ENCODE measurements at regions of chr2 and their contacts with region 1.

Region 1: GRCh38 chr2:215773728-215774127 is 239.6 kb downstream of the MREG start:
- DNase-seq: no peak
- H3K4me3 ChIP-seq: no peak overlapping the region
- H3K27ac ChIP-seq: no peak overlapping the region
- H3K4me1 ChIP-seq: peaks cover 9% of the 10 kb centered on the region
- H3K27me3 ChIP-seq: no peaks in the 10 kb centered on the region
- CTCF ChIP-seq: no peak
- EP300 ChIP-seq: no peak
- POLR2A ChIP-seq: no peak

Region 2: GRCh38 chr2:215787565-215788178 is 13.9 kb after region 1 on chr2:
- intact Hi-C with region 1: loop called in 1 of 4 experiments (anchors 2 kb)
- DNase-seq: no peak
- H3K4me3 ChIP-seq: no peak overlapping the region
- H3K27ac ChIP-seq: no peak overlapping the region
- H3K4me1 ChIP-seq: peaks cover 12% of the 10 kb centered on the region
- H3K27me3 ChIP-seq: no peaks in the 10 kb centered on the region
- CTCF ChIP-seq: no peak
- EP300 ChIP-seq: no peak
- POLR2A ChIP-seq: no peak

Region 3: GRCh38 chr2:215931256-215931903 is 157.7 kb after region 1 on chr2:
- intact Hi-C with region 1: no loop called
- DNase-seq: peak; percentile 31 to 78 (median 56)
- H3K4me3 ChIP-seq: no peak overlapping the region
- H3K27ac ChIP-seq: no peak overlapping the region
- H3K4me1 ChIP-seq: no peaks in the 10 kb centered on the region
- H3K27me3 ChIP-seq: no peaks in the 10 kb centered on the region
- CTCF ChIP-seq: peak; percentile 65 to 71 (median 68)
- EP300 ChIP-seq: no peak
- POLR2A ChIP-seq: no peak